Activated CD8-positive, alpha-beta memory T cell treated with anti-CD3 and anti-CD28 coated beads, Interleukin-2, amount 10 ng/mL, durations not matched to agents 7 days and 5 days (primary cell): ENCODE measurements at regions of chr12 and their contacts with region 1.

Region 1: DNA sequence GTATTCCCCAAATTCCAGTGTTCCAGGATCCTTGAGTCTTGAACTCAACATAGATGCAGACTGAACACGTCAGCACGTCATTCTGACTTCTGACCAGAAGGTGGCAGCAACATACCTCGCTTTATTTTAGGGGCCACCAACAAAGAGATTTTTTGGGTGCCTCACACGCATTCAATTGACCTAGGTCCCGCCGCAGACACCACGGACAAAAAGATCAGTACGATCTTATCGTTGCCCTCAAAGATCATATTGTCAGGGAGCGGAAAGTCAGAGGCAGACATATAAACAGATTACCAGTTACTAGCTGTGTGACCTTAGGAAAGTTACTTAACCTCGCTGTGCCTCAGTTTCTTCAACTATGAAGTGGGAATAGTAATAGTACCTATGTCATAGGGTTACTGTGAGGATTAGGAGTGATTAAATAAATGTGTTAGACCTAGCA is 6.5 kb upstream of the PRPH start:
- DNase-seq: peak; percentile 84
- ATAC-seq: peak; percentile 70
- H3K4me3 Mint-ChIP-seq: no peak overlapping the region
- H3K27ac Mint-ChIP-seq: no peak overlapping the region
- H3K4me1 Mint-ChIP-seq: peaks cover 3% of the 10 kb centered on the region
- H3K27me3 Mint-ChIP-seq: peaks cover 41% of the 10 kb centered on the region

Region 2: GRCh38 chr12:49274396-49275286 is 13.8 kb before region 1 on chr12:
- CTCF ChIA-PET with region 1: interaction called, 14 read pairs
- DNase-seq: no peak
- ATAC-seq: no peak
- H3K4me3 Mint-ChIP-seq: no peak overlapping the region
- H3K27ac Mint-ChIP-seq: no peak overlapping the region
- H3K4me1 Mint-ChIP-seq: peaks cover 9% of the 10 kb centered on the region
- H3K27me3 Mint-ChIP-seq: peaks cover under 1% of the 10 kb centered on the region

Region 3: GRCh38 chr12:49336645-49337584 is 48.5 kb after region 1 on chr12 and contains the start of gene C1QL4:
- CTCF ChIA-PET with region 1: interaction called, 202 read pairs
- DNase-seq: peak; percentile 87
- ATAC-seq: peak; percentile 92
- H3K4me3 Mint-ChIP-seq: peak within 1 kb of the TSS; percentile 40
- H3K27ac Mint-ChIP-seq: no peak within 1 kb of the TSS
- H3K4me1 Mint-ChIP-seq: peaks cover 17% of the 10 kb centered on the region
- H3K27me3 Mint-ChIP-seq: peaks cover 80% of the 10 kb centered on the region
- total RNA-seq, gene C1QL4: not detected